Activated naive CD4-positive, alpha-beta T cell treated with anti-CD3 and anti-CD28 coated beads for 36 hours (primary cell): ENCODE measurements at regions of chr4 and their contacts with region 1.

Region 1: DNA sequence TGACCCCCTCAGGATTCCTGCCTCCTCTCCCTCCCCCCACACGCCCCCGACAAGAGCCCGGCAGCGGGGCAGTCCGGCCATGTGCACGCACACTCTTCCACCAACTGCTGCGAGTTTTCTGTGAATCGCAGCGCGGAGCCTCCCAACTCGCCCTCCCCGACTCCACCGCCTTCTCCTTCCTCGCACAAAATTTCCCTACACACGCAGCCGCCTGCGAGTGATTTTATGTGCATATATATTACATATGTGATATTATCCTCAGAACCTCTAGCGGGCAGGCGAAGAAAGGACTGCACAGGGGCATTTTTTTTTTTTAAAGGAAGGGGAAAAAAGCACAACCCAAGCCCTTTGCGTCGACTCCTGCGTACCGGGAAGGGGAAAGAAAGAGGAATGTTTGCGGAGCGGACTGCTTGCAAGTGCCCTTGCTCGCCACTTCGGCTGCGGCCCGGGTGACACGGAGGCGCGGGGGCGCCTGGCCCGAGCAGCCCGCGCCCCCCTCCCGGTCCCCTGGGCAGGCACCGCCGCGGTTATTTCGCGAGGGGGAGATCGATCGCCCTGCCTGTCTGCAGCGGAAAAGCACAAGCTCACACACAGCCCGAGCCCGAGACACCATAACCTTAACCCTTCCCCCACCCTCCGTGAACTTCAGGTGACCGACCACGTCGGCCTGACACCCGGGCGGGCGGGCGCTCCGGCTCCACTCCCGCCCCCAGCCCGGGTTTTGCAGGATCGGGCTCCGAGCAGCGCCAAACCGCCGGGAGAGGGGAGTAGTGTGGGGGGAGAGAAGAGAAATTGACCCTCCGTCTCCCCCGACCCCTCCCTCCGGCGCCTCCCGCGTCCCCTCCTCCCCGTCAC is 2.3 kb downstream of the ZNF827 start:
- DNase-seq: peak; percentile 65
- H3K4me3 Mint-ChIP-seq: peak overlapping the region; percentile 100
- H3K27ac Mint-ChIP-seq: peak overlapping the region; percentile 89
- H3K4me1 Mint-ChIP-seq: peaks cover 51% of the 10 kb centered on the region
- H3K27me3 Mint-ChIP-seq: no peaks in the 10 kb centered on the region

Region 2: DNA sequence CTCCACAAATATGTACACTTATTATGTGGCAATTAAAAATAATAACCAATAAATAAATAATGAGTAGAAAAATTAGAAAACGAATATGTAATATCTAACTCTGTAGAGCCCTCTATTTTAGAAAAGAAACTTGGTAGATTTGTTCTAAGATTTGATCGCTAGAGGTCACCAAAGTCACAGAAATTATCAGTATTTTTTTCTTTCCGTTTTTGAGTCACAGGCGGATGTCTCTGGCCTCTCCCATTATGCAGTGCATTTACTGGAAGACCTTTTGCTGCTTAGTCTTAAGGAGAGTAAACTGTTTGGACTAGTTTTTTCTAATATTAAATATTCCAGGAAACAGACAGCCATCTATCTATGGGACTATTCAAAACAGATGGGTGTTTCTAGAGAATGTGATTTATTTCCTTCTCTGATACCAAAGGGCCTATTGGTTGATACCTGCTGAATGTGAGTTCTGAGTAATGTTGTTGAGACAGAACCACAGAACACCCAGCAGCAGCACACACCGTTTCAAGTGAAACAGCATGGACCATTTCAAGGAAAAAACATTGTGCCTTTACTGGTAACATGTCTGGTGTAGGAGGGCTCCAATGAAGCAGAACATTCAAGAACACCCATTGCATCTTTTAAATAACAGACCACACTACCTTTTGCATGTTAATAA is 1761.8 kb before region 1 on chr4:
- CTCF ChIA-PET with region 1: no interaction called
- intact Hi-C with region 1: loop called (anchors 10 kb)
- DNase-seq: peak; percentile 32
- H3K4me3 Mint-ChIP-seq: no peak overlapping the region
- H3K27ac Mint-ChIP-seq: peak overlapping the region; percentile 24
- H3K4me1 Mint-ChIP-seq: peaks cover 15% of the 10 kb centered on the region
- H3K27me3 Mint-ChIP-seq: peaks cover 4% of the 10 kb centered on the region

Region 3: DNA sequence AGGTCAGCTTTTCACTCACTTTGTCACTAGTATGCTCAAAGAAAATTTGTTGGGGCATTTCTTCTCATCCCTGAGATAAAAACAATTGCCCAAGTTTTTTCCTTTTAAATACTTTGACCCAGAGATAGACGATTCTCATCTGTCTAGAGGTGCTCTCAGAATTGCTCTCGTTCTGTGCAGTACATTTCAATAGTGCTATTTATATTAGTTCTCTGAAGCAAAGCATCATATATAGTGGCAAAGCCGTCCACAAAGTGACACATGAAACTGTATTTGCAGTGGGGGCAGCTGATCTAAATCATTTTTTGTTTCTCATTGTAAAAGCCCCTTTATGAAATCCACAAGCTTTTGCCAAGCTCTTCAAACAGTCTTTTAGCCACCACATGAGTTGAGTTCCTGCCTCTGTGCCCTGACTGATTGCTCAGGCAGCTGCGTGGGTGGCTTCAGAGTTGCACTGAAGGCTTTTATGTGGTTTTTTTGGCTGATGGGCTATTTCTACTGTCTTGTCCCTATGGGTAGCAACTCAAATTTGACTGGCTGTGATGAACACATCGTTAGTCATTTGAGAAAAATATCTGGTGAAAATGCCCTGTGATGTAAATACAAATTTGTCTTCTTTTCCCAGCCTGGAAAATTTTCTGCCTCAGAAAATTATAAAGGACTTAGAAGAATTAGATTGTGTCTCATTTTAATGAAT is 636.8 kb before region 1 on chr4:
- CTCF ChIA-PET with region 1: no interaction called
- intact Hi-C with region 1: loop called (anchors 5 kb)
- DNase-seq: peak; percentile 88
- H3K4me3 Mint-ChIP-seq: no peak overlapping the region
- H3K27ac Mint-ChIP-seq: no peak overlapping the region
- H3K4me1 Mint-ChIP-seq: peaks cover 23% of the 10 kb centered on the region
- H3K27me3 Mint-ChIP-seq: peaks cover 9% of the 10 kb centered on the region

Region 4: DNA sequence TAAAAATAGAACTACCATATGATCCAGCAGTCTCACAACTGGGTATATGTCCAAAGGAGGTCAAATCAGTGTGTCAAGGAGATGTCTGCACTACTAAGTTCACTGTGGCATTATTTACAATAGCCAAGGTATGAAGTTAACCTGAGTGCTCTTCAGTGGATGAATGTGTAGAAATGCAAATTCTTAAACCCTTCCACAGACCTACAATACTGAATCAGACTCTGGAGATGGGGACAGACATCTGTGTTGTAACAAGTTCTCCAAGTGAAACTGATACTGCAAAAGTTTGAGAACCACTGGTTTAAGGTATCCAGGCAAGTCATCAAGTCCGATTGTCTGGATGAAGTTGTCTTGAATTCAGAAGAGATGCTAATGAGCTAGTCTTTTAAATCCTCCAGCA is 416.2 kb before region 1 on chr4:
- CTCF ChIA-PET with region 1: no interaction called
- intact Hi-C with region 1: no loop called
- DNase-seq: no peak
- H3K4me3 Mint-ChIP-seq: no peak overlapping the region
- H3K27ac Mint-ChIP-seq: no peak overlapping the region
- H3K4me1 Mint-ChIP-seq: peaks cover 3% of the 10 kb centered on the region
- H3K27me3 Mint-ChIP-seq: peaks cover 11% of the 10 kb centered on the region

Region 5: GRCh38 chr4:145732895-145733880 is 203.2 kb before region 1 on chr4:
- CTCF ChIA-PET with region 1: no interaction called
- intact Hi-C with region 1: loop called (anchors 1 kb)
- DNase-seq: peak; percentile 91
- H3K4me3 Mint-ChIP-seq: peak overlapping the region; percentile 75
- H3K27ac Mint-ChIP-seq: peak overlapping the region; percentile 36
- H3K4me1 Mint-ChIP-seq: peaks cover 7% of the 10 kb centered on the region
- H3K27me3 Mint-ChIP-seq: peaks cover 10% of the 10 kb centered on the region

Region 6: GRCh38 chr4:145840162-145840768 is 96.1 kb before region 1 on chr4:
- CTCF ChIA-PET with region 1: interaction called, 3 read pairs
- intact Hi-C with region 1: loop called (anchors 2 kb)
- DNase-seq: peak; percentile 22
- H3K4me3 Mint-ChIP-seq: no peak overlapping the region
- H3K27ac Mint-ChIP-seq: no peak overlapping the region
- H3K4me1 Mint-ChIP-seq: peaks cover 22% of the 10 kb centered on the region
- H3K27me3 Mint-ChIP-seq: no peaks in the 10 kb centered on the region

Region 7: DNA sequence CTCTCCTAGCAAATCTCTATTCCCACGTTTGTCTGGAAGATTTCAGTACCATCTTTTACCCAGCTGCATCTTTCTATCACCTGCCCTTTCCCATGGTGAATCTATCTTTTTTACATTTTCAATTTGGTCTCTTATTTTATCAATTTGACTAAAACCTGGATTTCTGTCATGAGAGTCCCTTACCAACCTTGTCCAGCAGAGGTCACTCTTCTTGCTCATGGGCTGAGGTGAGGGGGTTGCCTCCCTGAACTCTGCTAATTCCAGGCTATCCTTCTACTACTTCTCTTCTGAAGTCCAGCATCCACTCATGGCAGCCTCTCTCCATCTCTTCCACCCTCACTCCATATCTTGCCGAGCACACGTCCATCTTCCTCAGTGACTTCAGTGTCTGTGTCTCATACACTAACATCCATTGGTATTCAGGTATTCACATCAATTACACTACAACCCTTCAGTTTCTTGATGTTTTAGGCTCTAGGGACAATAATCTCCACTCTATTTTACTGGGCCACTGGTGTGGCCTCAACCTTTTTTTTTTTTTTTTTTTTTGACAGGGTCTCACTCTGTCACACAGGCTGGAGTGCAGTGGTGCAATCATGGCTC is 20.0 kb after region 1 on chr4:
- CTCF ChIA-PET with region 1: no interaction called
- intact Hi-C with region 1: loop called (anchors 1 kb)
- DNase-seq: peak; percentile 41
- H3K4me3 Mint-ChIP-seq: no peak overlapping the region
- H3K27ac Mint-ChIP-seq: no peak overlapping the region
- H3K4me1 Mint-ChIP-seq: no peaks in the 10 kb centered on the region
- H3K27me3 Mint-ChIP-seq: no peaks in the 10 kb centered on the region

Region 8: GRCh38 chr4:147617173-147617840 is 1680.9 kb after region 1 on chr4 and contains the start of gene TMEM184C:
- CTCF ChIA-PET with region 1: no interaction called
- intact Hi-C with region 1: loop called (anchors 2 kb)
- DNase-seq: peak; percentile 100
- H3K4me3 Mint-ChIP-seq: peak within 1 kb of the TSS; percentile 89
- H3K27ac Mint-ChIP-seq: peak within 1 kb of the TSS; percentile 93
- H3K4me1 Mint-ChIP-seq: peaks cover 23% of the 10 kb centered on the region
- H3K27me3 Mint-ChIP-seq: no peaks in the 10 kb centered on the region
- total RNA-seq, gene TMEM184C: 11.5 to 12.5 TPM